ENCODE measurements at regions of chr7 and their contacts with region 1.

Region 1: GRCh38 chr7:73851410-73852234 is 9.3 kb upstream of the METTL27 start:
- DNase-seq: peak; percentile 99

Region 2: GRCh38 chr7:73992101-73992562 is 140.5 kb after region 1 on chr7:
- in situ Hi-C with region 1: no loop called
- DNase-seq: no peak

Region 3: DNA sequence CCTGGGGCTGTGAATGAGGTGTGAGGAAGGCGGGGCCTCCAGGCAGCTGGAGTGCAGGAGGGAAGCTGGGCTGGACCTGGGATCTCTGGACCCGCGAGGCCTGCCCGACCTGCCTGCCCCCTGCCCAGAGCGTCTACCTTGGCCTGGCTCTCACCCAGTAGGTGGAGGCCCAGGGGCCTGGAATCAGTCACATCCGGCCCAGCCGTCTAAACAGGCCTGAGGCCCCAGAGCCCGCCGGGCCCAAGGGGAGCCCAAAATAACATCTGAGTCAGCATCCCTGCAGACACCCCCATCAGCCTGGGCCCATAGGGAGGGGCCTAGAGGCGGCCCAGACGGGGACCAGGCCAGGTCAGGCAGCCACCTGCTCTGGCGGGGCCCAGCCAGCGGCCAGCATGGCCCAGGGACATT is 161.2 kb after region 1 on chr7:
- in situ Hi-C with region 1: loop called (anchors 25 kb)
- DNase-seq: no peak

Measured in ACHN (cell line).